SK-N-SH (cell line): ENCODE measurements at regions of chr11 and their contacts with region 1.

Region 1: DNA sequence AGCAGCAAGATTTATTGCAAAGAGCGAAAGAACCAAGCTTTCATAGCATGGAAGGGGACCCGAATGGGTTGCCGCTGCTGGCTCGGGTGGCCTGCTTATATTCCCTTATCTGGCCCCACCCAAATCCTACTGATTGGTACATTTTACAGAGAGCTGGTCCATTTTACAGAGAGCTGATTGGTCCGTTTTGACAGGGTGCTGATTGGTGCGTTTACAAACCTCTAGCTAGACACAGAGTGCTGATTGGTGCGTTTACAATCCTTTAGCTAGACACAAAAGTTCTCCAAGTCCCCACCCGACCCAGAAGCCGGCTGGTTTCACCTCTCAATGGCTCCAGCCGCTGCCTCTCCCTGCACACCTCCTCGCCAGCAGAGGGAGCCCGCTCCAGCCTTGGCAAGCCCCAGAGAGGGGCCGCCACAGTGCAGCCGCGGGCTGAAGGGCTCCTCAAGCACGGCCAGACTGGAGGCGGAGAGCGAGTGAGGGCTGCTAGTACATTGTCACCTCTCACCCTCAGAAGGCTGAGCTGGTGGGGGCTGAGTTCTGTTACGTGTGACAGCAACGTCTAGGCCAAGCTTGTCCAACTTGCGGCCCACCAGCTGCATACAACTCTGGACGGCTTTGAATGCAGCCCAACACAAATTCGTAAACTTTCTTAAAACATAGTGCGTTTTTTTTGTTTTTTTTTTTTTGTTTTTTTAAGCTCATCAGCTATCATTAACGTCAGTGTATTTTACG is 8.7 kb downstream of the PTH start:
- DNase-seq: no peak
- H3K4me3 ChIP-seq: no peak overlapping the region
- H3K27ac ChIP-seq: no peak overlapping the region
- H3K4me1 ChIP-seq: no peaks in the 10 kb centered on the region; a peak in 1 of 4 replicates
- H3K27me3 ChIP-seq: no peaks in the 10 kb centered on the region
- CTCF ChIP-seq: peak; percentile 43
- EP300 ChIP-seq: no peak
- RAD21 ChIP-seq: 0 out of 2 replicates have a peak, but pooled peaks have one; percentile 5

Region 2: DNA sequence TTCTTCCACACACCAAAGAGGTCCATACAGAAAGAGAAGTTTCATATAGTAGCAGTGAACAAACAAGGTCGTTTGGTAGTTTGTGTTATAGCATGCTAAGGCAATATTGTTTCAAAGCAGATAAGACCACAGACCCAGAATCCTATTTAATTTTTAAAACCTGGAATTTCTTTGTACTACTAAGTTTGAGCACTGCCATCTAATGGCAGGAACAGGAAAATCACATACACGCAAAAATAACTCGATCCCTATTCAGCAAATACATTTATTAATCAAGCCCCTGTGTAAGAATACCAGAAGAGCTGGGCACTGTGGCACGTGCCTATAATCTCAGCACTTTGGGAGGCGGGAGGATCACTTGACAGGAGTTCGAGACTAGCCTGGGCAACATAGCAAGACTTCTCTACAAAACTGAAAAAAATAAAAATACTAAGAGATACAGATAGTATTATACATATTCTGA is 21.2 kb before region 1 on chr11:
- CTCF ChIA-PET with region 1: interaction called, 13 read pairs
- POLR2A ChIA-PET with region 1: no interaction called
- DNase-seq: peak; percentile 58
- H3K4me3 ChIP-seq: no peak overlapping the region; a peak in 1 of 4 replicates
- H3K27ac ChIP-seq: no peak overlapping the region
- H3K4me1 ChIP-seq: peaks cover 12 to 15% of the 10 kb centered on the region in 2 experiments; a peak in 3 of 4 replicates
- H3K27me3 ChIP-seq: peaks cover 10% of the 10 kb centered on the region; the same call in 1 of the 2 replicates
- CTCF ChIP-seq: peak; percentile 76
- EP300 ChIP-seq: no peak
- RAD21 ChIP-seq: peak; percentile 65